Lower leg skin (tissue), 4 donors: ENCODE measurements at regions of chr12 and their contacts with region 1.

Region 1: DNA sequence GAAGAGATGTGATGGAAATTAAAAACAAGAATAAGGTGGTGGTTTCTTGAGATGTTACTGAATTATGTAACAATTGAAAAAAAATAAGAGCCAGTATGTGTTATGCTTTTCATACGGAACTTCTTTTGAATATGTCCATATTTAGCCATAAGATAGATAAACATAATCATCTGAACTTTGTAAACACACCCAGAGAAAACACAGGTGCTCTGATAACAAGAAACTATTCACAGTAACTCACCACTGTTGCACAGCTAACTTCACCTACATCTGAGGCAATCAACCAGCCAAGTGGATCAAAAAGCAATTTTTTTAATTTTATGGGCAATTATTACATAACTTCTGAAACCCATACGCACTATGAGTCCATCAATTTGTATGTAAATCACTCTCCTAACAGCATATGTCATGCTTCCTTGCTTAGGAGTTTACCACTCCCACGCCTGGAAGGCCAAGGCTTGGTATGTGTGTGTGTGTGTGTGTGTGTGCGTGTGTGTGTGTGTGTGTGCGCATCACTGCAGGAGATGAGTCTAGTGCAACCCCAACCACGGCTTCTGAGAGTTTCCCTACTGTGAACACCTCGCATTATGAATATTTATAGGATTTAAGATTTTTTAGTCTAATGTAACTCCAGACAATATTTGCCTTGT is 443.4 kb downstream of the BCAT1 start:
- DNase-seq: no peak
- H3K4me3 ChIP-seq: no peak overlapping the region
- CTCF ChIP-seq: no peak
- POLR2A ChIP-seq: no peak

Region 2: GRCh38 chr12:23510484-23510883 is 995.0 kb before region 1 on chr12:
- intact Hi-C with region 1: no loop called
- DNase-seq: no peak
- H3K4me3 ChIP-seq: no peak overlapping the region
- CTCF ChIP-seq: no peak
- POLR2A ChIP-seq: no peak

Region 3: GRCh38 chr12:24444634-24445033 is 60.9 kb before region 1 on chr12:
- intact Hi-C with region 1: loop called (anchors 5 kb)
- DNase-seq: no peak
- H3K4me3 ChIP-seq: no peak overlapping the region
- CTCF ChIP-seq: no peak
- POLR2A ChIP-seq: no peak

Region 4: DNA sequence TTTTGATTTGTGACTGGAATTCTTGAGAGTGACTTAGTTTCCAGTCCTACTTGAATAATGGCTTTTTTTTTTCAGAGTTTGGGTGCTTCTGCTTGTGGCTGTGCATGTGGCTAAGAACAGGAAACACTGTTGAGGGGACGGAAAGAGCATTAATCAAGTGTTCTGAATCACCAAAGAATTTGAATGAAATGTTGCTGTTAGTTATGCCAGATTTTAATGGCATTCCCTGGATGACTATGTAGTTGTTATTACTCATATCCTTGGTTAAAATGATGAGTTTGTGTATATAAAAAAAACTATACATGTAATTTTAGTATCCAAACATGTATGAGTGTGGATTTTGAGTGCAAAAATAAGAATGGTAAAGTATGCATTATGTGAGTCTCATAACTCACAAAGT is 95.5 kb after region 1 on chr12:
- intact Hi-C with region 1: no loop called
- DNase-seq: no peak
- H3K4me3 ChIP-seq: no peak overlapping the region
- CTCF ChIP-seq: no peak
- POLR2A ChIP-seq: no peak